Activated naive CD4-positive, alpha-beta T cell treated with anti-CD3 and anti-CD28 coated beads for 36 hours (primary cell): ENCODE measurements at regions of chr5 and their contacts with region 1.

Region 1: GRCh38 chr5:111757355-111758283 is 625 bp upstream of the NREP start:
- DNase-seq: peak; percentile 83
- H3K4me3 Mint-ChIP-seq: peak overlapping the region; percentile 85
- H3K27ac Mint-ChIP-seq: peak overlapping the region; percentile 77
- H3K4me1 Mint-ChIP-seq: peaks cover 16% of the 10 kb centered on the region
- H3K27me3 Mint-ChIP-seq: no peaks in the 10 kb centered on the region

Region 2: DNA sequence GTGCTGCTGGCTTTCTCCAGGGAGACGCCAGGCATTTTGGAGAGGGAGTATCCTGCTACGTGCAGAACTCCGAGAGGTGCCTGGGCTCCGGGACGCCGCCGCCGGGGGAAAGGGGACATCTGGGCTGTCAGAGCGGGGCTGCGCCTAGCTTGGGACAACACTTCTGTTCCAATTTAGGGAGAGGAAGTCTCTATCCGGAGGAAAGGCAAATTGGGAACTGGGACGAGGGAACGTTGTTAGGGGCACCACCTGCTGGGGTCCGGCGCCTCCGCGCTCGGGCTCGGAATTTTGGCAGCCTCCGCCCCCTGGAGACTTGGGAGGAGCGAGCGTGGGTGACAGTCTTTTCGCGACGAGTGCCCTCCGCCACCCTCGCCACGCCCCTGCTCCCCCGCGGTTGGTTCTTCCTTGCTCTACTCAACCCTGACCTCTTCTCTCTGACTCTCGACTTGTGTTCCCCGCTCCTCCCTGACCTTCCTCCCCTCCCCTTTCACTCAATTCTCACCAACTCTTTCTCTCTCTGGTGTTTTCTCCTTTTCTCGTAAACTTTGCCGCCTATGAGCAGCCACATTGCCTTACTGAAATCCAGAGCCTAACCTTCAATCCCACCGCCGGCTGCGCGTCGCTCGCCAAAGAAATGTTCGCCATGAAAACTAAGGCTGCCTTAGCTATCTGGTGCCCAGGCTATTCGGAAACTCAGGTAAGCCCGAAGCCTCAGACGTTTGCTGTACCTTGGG is 684.5 kb before region 1 on chr5:
- CTCF ChIA-PET with region 1: no interaction called
- intact Hi-C with region 1: loop called (anchors 5 kb)
- DNase-seq: peak; percentile 71
- H3K4me3 Mint-ChIP-seq: peak overlapping the region; percentile 88
- H3K27ac Mint-ChIP-seq: no peak overlapping the region
- H3K4me1 Mint-ChIP-seq: peaks cover 30% of the 10 kb centered on the region
- H3K27me3 Mint-ChIP-seq: peaks cover 61% of the 10 kb centered on the region

Region 3: DNA sequence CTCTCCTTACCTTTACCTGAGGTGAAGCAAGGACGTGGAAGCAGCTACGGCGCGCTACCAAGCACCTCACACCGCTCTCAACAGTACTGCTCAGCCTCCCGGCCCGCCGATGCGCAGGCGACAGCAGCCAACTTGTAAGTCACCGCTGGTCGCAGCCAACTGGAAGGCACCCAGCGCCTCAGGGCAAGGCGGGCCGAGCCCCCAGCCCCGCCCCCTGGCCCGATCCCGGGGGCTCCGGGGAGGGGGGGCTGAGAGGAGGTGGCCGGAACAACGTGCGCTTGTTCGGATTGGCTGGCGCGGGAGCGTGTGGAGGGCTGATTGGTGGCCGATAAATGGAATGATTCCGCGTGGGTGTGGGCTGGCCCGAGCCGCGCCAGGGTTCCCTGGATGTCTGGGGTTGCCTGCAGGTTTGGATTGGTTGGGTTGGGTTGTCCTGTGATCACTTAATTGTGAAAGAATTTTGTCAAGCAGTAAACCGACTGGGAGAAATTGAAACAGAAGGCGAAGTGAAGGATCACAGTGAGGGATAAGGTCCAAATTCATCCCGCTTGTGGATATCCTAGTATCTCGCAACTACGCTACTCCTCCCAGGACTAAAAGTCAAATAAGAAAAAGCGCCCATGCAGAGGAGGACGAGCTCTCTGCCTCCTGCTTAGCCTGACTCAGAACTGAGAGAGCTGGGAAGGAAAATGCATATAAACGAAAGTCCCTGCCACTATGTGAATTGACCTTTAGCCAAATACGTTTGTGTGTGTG is 245.1 kb before region 1 on chr5 and contains the start of gene STARD4:
- CTCF ChIA-PET with region 1: no interaction called
- intact Hi-C with region 1: loop called (anchors 1 kb)
- DNase-seq: peak; percentile 95
- H3K4me3 Mint-ChIP-seq: peak within 1 kb of the TSS; percentile 93
- H3K27ac Mint-ChIP-seq: peak within 1 kb of the TSS; percentile 94
- H3K4me1 Mint-ChIP-seq: peaks cover 37% of the 10 kb centered on the region
- H3K27me3 Mint-ChIP-seq: no peaks in the 10 kb centered on the region
- total RNA-seq, gene STARD4: 45.0 to 47.1 TPM

Region 4: DNA sequence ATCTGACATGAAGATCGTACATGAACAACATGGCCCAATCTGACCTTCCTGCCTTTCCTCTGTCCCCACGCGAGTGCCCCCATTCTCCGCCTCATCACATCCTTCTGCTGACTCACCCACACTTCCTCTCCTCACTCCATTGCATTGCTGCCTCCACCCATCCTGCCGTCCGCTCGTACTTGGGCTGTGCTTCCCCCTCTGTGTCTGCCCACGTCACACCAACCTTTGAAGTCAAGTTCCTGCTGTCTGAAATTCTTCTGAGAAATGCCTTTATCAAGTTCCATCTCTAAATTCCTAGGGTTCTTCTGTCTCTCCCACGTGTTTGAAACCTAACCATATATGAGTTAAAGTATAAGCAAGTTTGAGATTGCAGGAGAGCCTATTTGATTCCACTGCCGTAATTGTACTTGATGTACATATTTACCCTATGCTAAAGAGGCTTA is 227.3 kb before region 1 on chr5:
- CTCF ChIA-PET with region 1: interaction called, 5 read pairs
- intact Hi-C with region 1: loop called (anchors 1 kb)
- DNase-seq: peak; percentile 92
- H3K4me3 Mint-ChIP-seq: peak overlapping the region; percentile 62
- H3K27ac Mint-ChIP-seq: peak overlapping the region; percentile 83
- H3K4me1 Mint-ChIP-seq: peaks cover 16% of the 10 kb centered on the region
- H3K27me3 Mint-ChIP-seq: no peaks in the 10 kb centered on the region

Region 5: GRCh38 chr5:111596705-111597104 is 160.9 kb before region 1 on chr5:
- CTCF ChIA-PET with region 1: no interaction called
- intact Hi-C with region 1: no loop called
- DNase-seq: no peak
- H3K4me3 Mint-ChIP-seq: no peak overlapping the region
- H3K27ac Mint-ChIP-seq: no peak overlapping the region
- H3K4me1 Mint-ChIP-seq: no peaks in the 10 kb centered on the region
- H3K27me3 Mint-ChIP-seq: peaks cover 5% of the 10 kb centered on the region

Region 6: DNA sequence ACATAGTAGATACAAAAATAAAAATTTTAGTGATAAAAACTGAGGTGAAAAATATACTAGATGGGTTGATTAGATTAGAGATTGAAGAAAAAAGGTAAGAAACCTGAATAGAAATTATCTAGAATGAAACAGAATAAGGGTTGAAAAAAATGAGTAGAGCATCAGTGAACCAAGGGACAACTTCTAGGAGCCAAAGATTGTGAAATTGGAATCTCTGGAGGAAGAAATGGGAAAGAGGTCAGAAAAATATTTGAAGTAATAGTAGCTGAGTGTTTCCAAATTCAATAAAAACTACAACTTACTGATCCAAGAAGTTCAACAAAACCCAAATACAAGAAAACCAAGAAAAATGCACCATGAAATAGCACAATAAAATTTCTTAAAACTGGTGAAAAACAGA is 128.7 kb before region 1 on chr5:
- CTCF ChIA-PET with region 1: no interaction called
- intact Hi-C with region 1: loop called (anchors 2 kb)
- DNase-seq: no peak
- H3K4me3 Mint-ChIP-seq: no peak overlapping the region
- H3K27ac Mint-ChIP-seq: no peak overlapping the region
- H3K4me1 Mint-ChIP-seq: peaks cover 17% of the 10 kb centered on the region
- H3K27me3 Mint-ChIP-seq: no peaks in the 10 kb centered on the region

Region 7: GRCh38 chr5:112146323-112147226 is 389.0 kb after region 1 on chr5:
- CTCF ChIA-PET with region 1: no interaction called
- intact Hi-C with region 1: loop called (anchors 2 kb)
- DNase-seq: peak; percentile 81
- H3K4me3 Mint-ChIP-seq: no peak overlapping the region
- H3K27ac Mint-ChIP-seq: no peak overlapping the region
- H3K4me1 Mint-ChIP-seq: no peaks in the 10 kb centered on the region
- H3K27me3 Mint-ChIP-seq: peaks cover 3% of the 10 kb centered on the region